ENCODE measurements at regions of chr1 and their contacts with region 1.

Region 1: GRCh38 chr1:112637254-112638116 is 17.9 kb downstream of the CAPZA1 start:
- DNase-seq: peak; percentile 26
- ATAC-seq: peak; percentile 78
- H3K4me3 ChIP-seq: no peak overlapping the region
- H3K27ac ChIP-seq: peak overlapping the region; percentile 50
- H3K4me1 ChIP-seq: peaks cover 28% of the 10 kb centered on the region
- H3K27me3 ChIP-seq: no peaks in the 10 kb centered on the region
- CTCF ChIP-seq: no peak

Region 2: GRCh38 chr1:112579801-112580510 is 57.5 kb before region 1 on chr1:
- CTCF ChIA-PET with region 1: no interaction called
- POLR2A ChIA-PET with region 1: no interaction called
- intact Hi-C with region 1: no loop called
- DNase-seq: no peak
- ATAC-seq: no peak
- H3K4me3 ChIP-seq: no peak overlapping the region
- H3K27ac ChIP-seq: no peak overlapping the region
- H3K4me1 ChIP-seq: peaks cover 19% of the 10 kb centered on the region
- H3K27me3 ChIP-seq: no peaks in the 10 kb centered on the region
- CTCF ChIP-seq: no peak

Region 3: DNA sequence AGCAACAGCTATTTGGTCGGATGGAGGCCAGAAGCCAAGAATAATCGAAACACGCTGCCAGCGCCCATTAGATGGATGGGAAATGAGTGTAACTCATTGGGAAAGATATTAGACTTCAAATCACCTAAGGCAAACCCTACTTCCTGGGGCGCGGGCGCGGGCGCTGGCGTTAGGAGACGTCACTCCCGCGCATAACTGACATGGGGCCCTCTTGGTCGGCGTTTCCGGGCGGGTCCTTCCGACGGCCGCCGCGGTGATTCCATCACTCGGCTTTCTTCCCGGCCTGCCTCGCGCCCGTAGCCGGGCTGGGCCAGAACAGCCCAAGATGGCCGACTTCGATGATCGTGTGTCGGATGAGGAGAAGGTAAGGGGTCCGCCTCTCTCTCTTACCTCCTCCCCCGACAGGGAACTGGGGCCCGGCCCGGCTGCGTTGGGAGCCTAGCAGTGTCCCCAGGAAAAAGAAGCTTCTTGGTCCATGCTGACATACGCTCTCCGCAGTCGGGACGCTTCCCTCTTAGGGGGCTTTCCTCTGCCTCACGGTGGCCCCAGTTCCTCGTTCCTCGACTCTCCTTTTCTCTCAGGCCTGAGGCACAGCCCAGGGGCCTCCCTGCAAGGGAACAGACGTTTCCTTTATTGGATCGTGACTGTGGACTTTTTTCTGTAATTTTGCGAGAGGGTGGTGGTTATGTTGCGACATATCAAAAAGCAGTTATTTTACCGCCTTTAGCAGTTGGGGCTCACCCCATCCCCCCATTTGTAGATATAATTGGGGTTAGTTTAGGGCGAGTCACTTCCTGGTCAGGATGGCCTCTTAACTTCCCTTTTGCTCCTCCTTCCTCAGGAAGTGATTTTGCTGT is 17.7 kb before region 1 on chr1 and contains the start of gene CAPZA1:
- CTCF ChIA-PET with region 1: no interaction called
- POLR2A ChIA-PET with region 1: no interaction called
- intact Hi-C with region 1: loop called (anchors 1 kb)
- DNase-seq: peak; percentile 90
- ATAC-seq: peak; percentile 85
- H3K4me3 ChIP-seq: peak within 1 kb of the TSS; percentile 90
- H3K27ac ChIP-seq: peak within 1 kb of the TSS; percentile 93
- H3K4me1 ChIP-seq: peaks cover 22% of the 10 kb centered on the region
- H3K27me3 ChIP-seq: no peaks in the 10 kb centered on the region
- CTCF ChIP-seq: no peak
- total RNA-seq, gene CAPZA1: 177 and 273 TPM in 2 replicates